ENCODE measurements at regions of chr17 and their contacts with region 1.

Region 1: DNA sequence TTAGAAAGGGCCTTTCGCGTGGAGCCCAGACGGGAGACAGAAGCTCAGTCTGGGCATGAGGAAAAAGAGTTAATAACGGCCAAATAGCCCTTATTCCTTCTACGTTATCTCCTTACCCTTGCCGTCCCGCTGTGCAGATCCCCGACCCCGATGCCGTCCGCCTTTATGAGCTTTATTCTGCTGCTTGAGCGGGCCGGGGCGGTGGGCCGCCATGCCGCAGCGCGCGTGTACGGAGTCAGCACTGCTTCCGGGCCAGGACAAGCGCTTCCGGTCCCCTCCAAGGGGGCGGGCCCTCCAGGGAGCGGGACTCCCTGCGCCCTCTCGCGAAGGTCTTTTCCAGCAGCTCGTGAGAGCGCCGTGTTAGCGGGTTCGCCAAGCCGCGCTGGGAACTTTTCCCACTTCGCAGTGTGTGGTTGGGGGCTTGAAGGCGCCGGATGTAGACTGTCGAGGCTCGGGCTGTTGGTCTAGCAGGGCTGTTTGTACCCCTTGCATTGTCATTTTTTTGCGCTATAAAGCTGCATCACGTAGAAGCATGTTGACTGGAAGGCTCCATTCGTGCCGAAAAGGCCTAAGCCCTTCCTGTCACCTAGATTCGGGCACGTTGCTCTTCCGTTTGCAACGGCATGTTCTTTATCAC is at the start of gene TSR1:
- H3K4me3 Mint-ChIP-seq: peak within 1 kb of the TSS; percentile 94
- H3K27ac Mint-ChIP-seq: peak within 1 kb of the TSS; percentile 85
- H3K4me1 Mint-ChIP-seq: peaks cover 27% of the 10 kb centered on the region
- H3K27me3 Mint-ChIP-seq: no peaks in the 10 kb centered on the region

Region 2: GRCh38 chr17:2303204-2304188 is 32.8 kb before region 1 on chr17 and contains the starts of genes SMG6 and SRR:
- intact Hi-C with region 1: loop called (anchors 1 kb)
- H3K4me3 Mint-ChIP-seq: peak within 1 kb of the TSS; percentile 83
- H3K27ac Mint-ChIP-seq: peak within 1 kb of the TSS; percentile 84
- H3K4me1 Mint-ChIP-seq: peaks cover 44% of the 10 kb centered on the region
- H3K27me3 Mint-ChIP-seq: no peaks in the 10 kb centered on the region

Measured in dendritic cell treated with granulocyte-macrophage colony-stimulating factor and Interleukin-4, amounts not matched to agents 40 ng/mL and 50 ng/mL, for 4 days (primary cell).